ENCODE measurements at regions of chr1 and their contacts with region 1.

Region 1: DNA sequence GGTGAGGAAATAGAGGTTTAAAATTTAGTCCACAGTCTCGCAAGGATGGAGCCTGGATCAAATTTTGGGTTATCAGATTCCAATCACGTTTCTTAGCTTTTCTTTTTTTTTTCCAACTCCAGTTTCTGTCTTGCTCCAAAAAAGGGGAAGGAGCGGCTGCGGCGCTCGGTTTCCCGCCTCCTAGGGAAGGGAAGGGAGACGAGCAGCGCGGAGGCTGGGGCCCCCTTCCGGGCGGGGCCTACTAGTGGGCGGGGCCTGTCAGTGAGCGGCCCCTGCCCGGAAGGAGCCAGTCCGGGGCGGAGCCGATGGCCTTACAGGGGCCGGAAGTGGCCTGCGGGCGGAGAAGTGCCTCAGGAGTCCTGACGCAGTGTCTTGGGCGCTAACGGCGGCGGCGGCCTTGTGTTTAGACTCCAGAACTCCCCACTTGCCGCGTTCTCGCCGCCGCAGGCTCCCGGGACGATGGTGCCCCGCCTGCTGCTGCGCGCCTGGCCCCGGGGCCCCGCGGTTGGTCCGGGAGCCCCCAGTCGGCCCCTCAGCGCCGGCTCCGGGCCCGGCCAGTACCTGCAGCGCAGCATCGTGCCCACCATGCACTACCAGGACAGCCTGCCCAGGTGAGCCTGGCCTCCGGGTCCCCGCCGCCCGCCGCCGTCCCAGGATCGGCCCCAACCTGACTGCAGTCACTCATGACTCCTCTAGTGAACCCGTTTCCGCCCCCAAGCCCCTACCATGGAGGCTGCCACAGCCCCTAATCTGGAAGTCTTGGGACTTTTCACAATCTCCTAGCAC is at the start of gene CPT2:
- DNase-seq: peak; percentile 89
- ATAC-seq: peak; percentile 99
- H3K4me3 Mint-ChIP-seq: peak within 1 kb of the TSS; percentile 92
- H3K27ac Mint-ChIP-seq: peak within 1 kb of the TSS; percentile 94
- H3K4me1 Mint-ChIP-seq: peaks cover 25% of the 10 kb centered on the region
- H3K27me3 Mint-ChIP-seq: no peaks in the 10 kb centered on the region
- CTCF ChIP-seq: no peak
- total RNA-seq, gene CPT2: 12.5 and 15.7 TPM in 2 replicates

Region 2: GRCh38 chr1:52726265-52727113 is 470.2 kb before region 1 on chr1 and contains the start of gene ZYG11B:
- CTCF ChIA-PET with region 1: no interaction called
- POLR2A ChIA-PET with region 1: no interaction called
- intact Hi-C with region 1: loop called (anchors 1 kb)
- DNase-seq: peak; percentile 90
- ATAC-seq: peak; percentile 94
- H3K4me3 Mint-ChIP-seq: peak within 1 kb of the TSS; percentile 91
- H3K27ac Mint-ChIP-seq: peak within 1 kb of the TSS; percentile 85
- H3K4me1 Mint-ChIP-seq: peaks cover 35% of the 10 kb centered on the region
- H3K27me3 Mint-ChIP-seq: no peaks in the 10 kb centered on the region
- CTCF ChIP-seq: no peak
- total RNA-seq, gene ZYG11B: 14.9 and 17.3 TPM in 2 replicates

Region 3: DNA sequence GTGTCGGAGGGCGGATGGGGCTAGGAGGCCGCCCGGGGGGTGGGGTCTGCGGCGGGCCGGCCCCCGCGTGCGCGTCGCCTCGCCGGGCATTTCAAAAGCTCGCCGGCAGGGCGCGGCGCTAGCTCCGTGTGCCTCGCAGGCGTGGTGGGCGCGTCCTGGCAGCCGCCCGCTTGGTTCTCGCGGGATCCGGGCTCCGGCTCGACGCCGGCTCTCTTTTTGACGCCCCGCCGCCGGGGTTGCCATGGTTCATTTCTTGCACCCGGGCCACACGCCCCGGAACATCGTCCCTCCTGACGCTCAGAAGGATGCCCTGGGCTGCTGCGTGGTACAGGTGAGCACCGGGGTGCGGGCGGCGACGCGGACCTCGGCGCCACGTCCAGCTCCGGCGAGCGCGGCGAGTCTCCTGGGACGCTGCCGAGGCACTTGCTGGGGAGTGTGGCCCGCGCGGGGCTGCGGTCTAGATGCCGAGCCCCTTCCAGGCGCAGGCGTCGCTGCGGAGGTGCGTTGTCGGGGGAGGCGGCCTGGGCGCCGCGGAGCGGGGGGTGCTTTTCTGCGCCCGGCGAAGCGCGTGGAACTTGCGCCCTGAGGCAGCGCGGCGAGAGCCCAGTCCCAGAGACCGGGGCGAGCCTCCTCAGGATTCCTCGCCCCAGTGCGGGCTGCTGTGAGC is 353.9 kb before region 1 on chr1 and contains the start of gene ZYG11A:
- CTCF ChIA-PET with region 1: no interaction called
- POLR2A ChIA-PET with region 1: no interaction called
- intact Hi-C with region 1: loop called (anchors 5 kb)
- DNase-seq: peak; percentile 74
- ATAC-seq: peak; percentile 97
- H3K4me3 Mint-ChIP-seq: peak within 1 kb of the TSS; percentile 80
- H3K27ac Mint-ChIP-seq: peak within 1 kb of the TSS; percentile 59
- H3K4me1 Mint-ChIP-seq: peaks cover 6% of the 10 kb centered on the region
- H3K27me3 Mint-ChIP-seq: peaks cover 6% of the 10 kb centered on the region
- CTCF ChIP-seq: no peak
- total RNA-seq, gene ZYG11A: 1.3 and 1.5 TPM in 2 replicates

Region 4: GRCh38 chr1:53014791-53015507 is 181.7 kb before region 1 on chr1:
- CTCF ChIA-PET with region 1: no interaction called
- POLR2A ChIA-PET with region 1: no interaction called
- intact Hi-C with region 1: loop called (anchors 10 kb)
- DNase-seq: peak; percentile 37
- ATAC-seq: peak; percentile 94
- H3K4me3 Mint-ChIP-seq: peak overlapping the region; percentile 92
- H3K27ac Mint-ChIP-seq: peak overlapping the region; percentile 72
- H3K4me1 Mint-ChIP-seq: peaks cover 36% of the 10 kb centered on the region
- H3K27me3 Mint-ChIP-seq: no peaks in the 10 kb centered on the region
- CTCF ChIP-seq: no peak

Region 5: GRCh38 chr1:53031727-53032126 is 165.0 kb before region 1 on chr1:
- CTCF ChIA-PET with region 1: no interaction called
- POLR2A ChIA-PET with region 1: no interaction called
- intact Hi-C with region 1: no loop called
- DNase-seq: no peak
- ATAC-seq: no peak
- H3K4me3 Mint-ChIP-seq: no peak overlapping the region
- H3K27ac Mint-ChIP-seq: no peak overlapping the region
- H3K4me1 Mint-ChIP-seq: no peaks in the 10 kb centered on the region
- H3K27me3 Mint-ChIP-seq: no peaks in the 10 kb centered on the region
- CTCF ChIP-seq: no peak

Region 6: GRCh38 chr1:53134961-53135734 is 61.5 kb before region 1 on chr1:
- CTCF ChIA-PET with region 1: no interaction called
- POLR2A ChIA-PET with region 1: no interaction called
- intact Hi-C with region 1: no loop called
- DNase-seq: no peak
- ATAC-seq: no peak
- H3K4me3 Mint-ChIP-seq: no peak overlapping the region
- H3K27ac Mint-ChIP-seq: no peak overlapping the region
- H3K4me1 Mint-ChIP-seq: no peaks in the 10 kb centered on the region
- H3K27me3 Mint-ChIP-seq: peaks cover 2% of the 10 kb centered on the region
- CTCF ChIP-seq: no peak

Region 7: DNA sequence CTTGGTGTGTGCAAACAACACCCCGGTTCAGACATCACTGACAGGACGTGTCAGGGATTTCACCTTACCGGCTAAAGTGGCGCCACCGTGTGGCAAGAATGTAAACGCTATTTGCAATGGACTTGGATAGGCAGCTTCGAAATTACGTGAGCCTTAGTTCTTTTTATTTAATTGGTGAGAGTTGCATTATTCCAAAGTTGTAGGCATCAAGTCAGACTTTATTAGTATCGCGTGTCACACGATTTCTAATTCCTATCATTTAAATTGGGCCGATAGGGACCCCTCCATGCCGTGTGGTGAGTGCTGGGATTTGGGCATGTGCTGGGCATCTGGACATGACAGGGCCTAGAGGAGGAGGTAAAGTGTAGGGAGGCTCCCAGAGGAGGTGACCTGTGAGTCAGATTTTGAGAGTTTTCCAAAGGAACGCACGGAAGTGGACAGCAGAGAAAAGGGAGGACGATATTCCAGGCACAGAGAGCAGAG is 14.5 kb before region 1 on chr1:
- CTCF ChIA-PET with region 1: interaction called, 21 read pairs
- POLR2A ChIA-PET with region 1: no interaction called
- intact Hi-C with region 1: no loop called
- DNase-seq: peak; percentile 62
- ATAC-seq: peak; percentile 71
- H3K4me3 Mint-ChIP-seq: no peak overlapping the region
- H3K27ac Mint-ChIP-seq: no peak overlapping the region
- H3K4me1 Mint-ChIP-seq: no peaks in the 10 kb centered on the region
- H3K27me3 Mint-ChIP-seq: peaks cover 16% of the 10 kb centered on the region
- CTCF ChIP-seq: peak; percentile 57

Region 8: GRCh38 chr1:53220171-53220961 is 23.7 kb after region 1 on chr1 and contains the start of gene CZIB:
- CTCF ChIA-PET with region 1: no interaction called
- POLR2A ChIA-PET with region 1: interaction called, 15 read pairs
- intact Hi-C with region 1: loop called (anchors 1 kb)
- DNase-seq: peak; percentile 98
- ATAC-seq: peak; percentile 92
- H3K4me3 Mint-ChIP-seq: peak within 1 kb of the TSS; percentile 94
- H3K27ac Mint-ChIP-seq: peak within 1 kb of the TSS; percentile 97
- H3K4me1 Mint-ChIP-seq: peaks cover 20% of the 10 kb centered on the region
- H3K27me3 Mint-ChIP-seq: no peaks in the 10 kb centered on the region
- CTCF ChIP-seq: no peak
- total RNA-seq, gene CZIB: 48.9 and 51.8 TPM in 2 replicates

Region 9: GRCh38 chr1:53238197-53239155 is 41.8 kb after region 1 on chr1 and contains the start of gene MAGOH:
- CTCF ChIA-PET with region 1: no interaction called
- POLR2A ChIA-PET with region 1: interaction called, 4 read pairs
- intact Hi-C with region 1: loop called (anchors 1 kb)
- DNase-seq: peak; percentile 93
- ATAC-seq: peak; percentile 100
- H3K4me3 Mint-ChIP-seq: peak within 1 kb of the TSS; percentile 97
- H3K27ac Mint-ChIP-seq: peak within 1 kb of the TSS; percentile 91
- H3K4me1 Mint-ChIP-seq: peaks cover 32% of the 10 kb centered on the region
- H3K27me3 Mint-ChIP-seq: no peaks in the 10 kb centered on the region
- CTCF ChIP-seq: no peak
- total RNA-seq, gene MAGOH: 56.6 and 65.0 TPM in 2 replicates

Region 10: DNA sequence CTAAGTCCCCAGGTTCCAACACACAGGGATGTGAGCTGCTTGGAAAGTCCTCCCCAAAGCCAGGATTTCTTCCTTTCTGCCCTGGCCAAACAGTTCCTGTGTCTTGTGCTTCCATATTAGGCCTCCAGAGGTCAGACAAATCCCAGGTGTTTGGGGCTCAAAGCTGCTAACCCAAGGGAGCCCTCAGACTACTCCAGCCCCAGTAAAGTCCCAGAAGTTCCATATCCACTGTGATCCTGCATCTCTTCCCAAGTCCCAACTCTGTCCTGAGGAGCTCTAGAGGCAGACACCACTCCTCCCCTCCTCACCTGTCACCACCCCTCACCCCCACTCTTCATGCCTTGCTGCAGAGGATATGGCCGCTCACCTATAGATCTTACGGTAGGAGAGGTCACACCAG is 69.4 kb after region 1 on chr1:
- CTCF ChIA-PET with region 1: no interaction called
- POLR2A ChIA-PET with region 1: no interaction called
- intact Hi-C with region 1: no loop called
- DNase-seq: no peak
- ATAC-seq: no peak
- H3K4me3 Mint-ChIP-seq: no peak overlapping the region
- H3K27ac Mint-ChIP-seq: no peak overlapping the region
- H3K4me1 Mint-ChIP-seq: peaks cover 10% of the 10 kb centered on the region
- H3K27me3 Mint-ChIP-seq: no peaks in the 10 kb centered on the region
- CTCF ChIP-seq: no peak

Measured in activated B cell treated with CpG ODN at 0.5 μM for 24 hours (primary cell).